ENCODE measurements at regions of chr1 and their contacts with region 1.

Region 1: GRCh38 chr1:241531195-241532161 is 700 bp upstream of the KMO start:
- DNase-seq: no peak
- ATAC-seq: peak; percentile 77
- H3K4me3 Mint-ChIP-seq: peak overlapping the region; percentile 84
- H3K27ac Mint-ChIP-seq: peak overlapping the region; percentile 98
- H3K4me1 Mint-ChIP-seq: peaks cover 30% of the 10 kb centered on the region
- H3K27me3 Mint-ChIP-seq: peaks cover 3% of the 10 kb centered on the region

Region 2: GRCh38 chr1:241551759-241552638 is 20.5 kb after region 1 on chr1:
- CTCF ChIA-PET with region 1: interaction called, 4 read pairs
- POLR2A ChIA-PET with region 1: no interaction called
- intact Hi-C with region 1: loop called (anchors 1 to 2 kb)
- DNase-seq: peak; percentile 75
- ATAC-seq: peak; percentile 97
- H3K4me3 Mint-ChIP-seq: peak overlapping the region; percentile 71
- H3K27ac Mint-ChIP-seq: peak overlapping the region; percentile 98
- H3K4me1 Mint-ChIP-seq: peaks cover 30% of the 10 kb centered on the region
- H3K27me3 Mint-ChIP-seq: no peaks in the 10 kb centered on the region

Region 3: GRCh38 chr1:241611063-241611462 is 79.6 kb after region 1 on chr1:
- CTCF ChIA-PET with region 1: interaction called, 4 read pairs
- POLR2A ChIA-PET with region 1: interaction called, 3 read pairs
- intact Hi-C with region 1: loop called (anchors 1 to 5 kb)
- DNase-seq: no peak
- ATAC-seq: peak; percentile 71
- H3K4me3 Mint-ChIP-seq: no peak overlapping the region
- H3K27ac Mint-ChIP-seq: no peak overlapping the region
- H3K4me1 Mint-ChIP-seq: peaks cover 14% of the 10 kb centered on the region
- H3K27me3 Mint-ChIP-seq: no peaks in the 10 kb centered on the region

Region 4: GRCh38 chr1:241677201-241677600 is 145.7 kb after region 1 on chr1:
- CTCF ChIA-PET with region 1: no interaction called
- POLR2A ChIA-PET with region 1: no interaction called
- intact Hi-C with region 1: loop called in 1 of 2 experiments (anchors 1 kb)
- DNase-seq: peak; percentile 28
- ATAC-seq: peak; percentile 97
- H3K4me3 Mint-ChIP-seq: peak overlapping the region; percentile 28
- H3K27ac Mint-ChIP-seq: peak overlapping the region; percentile 35
- H3K4me1 Mint-ChIP-seq: peaks cover 27% of the 10 kb centered on the region
- H3K27me3 Mint-ChIP-seq: peaks cover 6% of the 10 kb centered on the region

Region 5: GRCh38 chr1:241847796-241848685 is 316.6 kb after region 1 on chr1 and contains the start of gene EXO1:
- CTCF ChIA-PET with region 1: interaction called, 3 read pairs
- POLR2A ChIA-PET with region 1: no interaction called
- intact Hi-C with region 1: loop called (anchors 1 to 5 kb)
- DNase-seq: peak; percentile 95
- ATAC-seq: peak; percentile 97
- H3K4me3 Mint-ChIP-seq: peak within 1 kb of the TSS; percentile 99
- H3K27ac Mint-ChIP-seq: peak within 1 kb of the TSS; percentile 99
- H3K4me1 Mint-ChIP-seq: peaks cover 14% of the 10 kb centered on the region
- H3K27me3 Mint-ChIP-seq: no peaks in the 10 kb centered on the region
- total RNA-seq, gene EXO1: 53.8 to 57.8 TPM

Region 6: GRCh38 chr1:242017584-242018233 is 486.2 kb after region 1 on chr1:
- CTCF ChIA-PET with region 1: no interaction called
- POLR2A ChIA-PET with region 1: no interaction called
- intact Hi-C with region 1: loop called in 1 of 2 experiments (anchors 2 kb)
- DNase-seq: peak; percentile 54
- ATAC-seq: peak; percentile 63
- H3K4me3 Mint-ChIP-seq: no peak overlapping the region
- H3K27ac Mint-ChIP-seq: no peak overlapping the region
- H3K4me1 Mint-ChIP-seq: no peaks in the 10 kb centered on the region
- H3K27me3 Mint-ChIP-seq: no peaks in the 10 kb centered on the region